ENCODE measurements at regions of chr20 and their contacts with region 1.

Region 1: GRCh38 chr20:20568604-20569205 is 143.7 kb downstream of the RALGAPA2 start:
- DNase-seq: peak; percentile 5 to 20 (median 10)
- ATAC-seq: 0 out of 3 replicates have a peak, but pooled peaks have one; percentile 44
- H3K4me3 ChIP-seq: no peak overlapping the region
- H3K27ac ChIP-seq: no peak overlapping the region
- H3K4me1 ChIP-seq: no peaks in the 10 kb centered on the region
- H3K27me3 ChIP-seq: no peaks in the 10 kb centered on the region
- CTCF ChIP-seq: peak; percentile 52 to 78 (median 55); a peak in 5 of 6 replicates
- EP300 ChIP-seq: no peak
- POLR2A ChIP-seq: no peak
- RAD21 ChIP-seq: peak; percentile 75 to 77

Region 2: GRCh38 chr20:20017001-20017843 is 551.5 kb before region 1 on chr20 and contains the start of gene NAA20:
- CTCF ChIA-PET with region 1: no interaction called
- POLR2A ChIA-PET with region 1: no interaction called
- in situ Hi-C with region 1: no loop called
- intact Hi-C with region 1: loop called (anchors 10 kb)
- DNase-seq: peak; percentile 80 to 91 (median 86)
- ATAC-seq: peak; percentile 98
- H3K4me3 ChIP-seq: peak within 1 kb of the TSS; percentile 92
- H3K27ac ChIP-seq: peak within 1 kb of the TSS; percentile 73
- H3K4me1 ChIP-seq: peaks cover 7 to 13% of the 10 kb centered on the region in 2 experiments; a peak in 4 of 5 replicates
- H3K27me3 ChIP-seq: no peaks in the 10 kb centered on the region
- CTCF ChIP-seq: peak; percentile 53 to 65 (median 61)
- EP300 ChIP-seq: no peak
- POLR2A ChIP-seq: peak; percentile 51; the same call in 1 of the 2 replicates
- RAD21 ChIP-seq: no peak
- polyA plus RNA-seq, gene NAA20: 341 to 361 TPM

Region 3: DNA sequence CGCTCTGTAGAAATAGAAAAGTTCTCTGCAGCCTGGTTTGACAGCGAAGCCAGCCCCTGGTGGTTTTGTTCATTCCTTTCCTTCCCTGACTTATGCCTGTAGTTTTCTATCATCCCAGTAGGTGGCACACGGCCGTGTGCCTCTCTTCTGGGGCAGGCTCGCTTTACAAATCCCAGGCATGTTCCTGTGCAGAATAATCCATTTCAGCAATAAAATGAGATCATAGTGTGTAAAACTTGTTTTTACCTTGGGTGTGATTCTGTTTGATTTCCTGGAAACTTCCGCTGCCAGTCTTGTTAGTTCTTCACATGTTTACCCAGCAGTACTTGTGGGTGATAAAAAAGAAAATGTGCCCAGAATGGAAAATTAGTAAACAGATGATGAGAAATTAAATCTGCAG is 208.2 kb before region 1 on chr20:
- CTCF ChIA-PET with region 1: interaction called, 5 read pairs
- POLR2A ChIA-PET with region 1: no interaction called
- in situ Hi-C with region 1: no loop called
- intact Hi-C with region 1: loop called (anchors 2 kb)
- DNase-seq: peak; percentile 44 to 53 (median 50)
- ATAC-seq: peak; percentile 86
- H3K4me3 ChIP-seq: no peak overlapping the region
- H3K27ac ChIP-seq: no peak overlapping the region
- H3K4me1 ChIP-seq: no peaks in the 10 kb centered on the region; a peak in 1 of 5 replicates
- H3K27me3 ChIP-seq: peaks cover 0 to 16% of the 10 kb centered on the region in 2 experiments; a peak in 2 of 5 replicates
- CTCF ChIP-seq: peak; percentile 60 to 77 (median 62)
- EP300 ChIP-seq: no peak
- POLR2A ChIP-seq: no peak
- RAD21 ChIP-seq: peak; percentile 51 to 62

Measured in K562 (cell line).